Right ventricle myocardium inferior (tissue), 1 donor: ENCODE measurements at regions of chr6 and their contacts with region 1.

Region 1: DNA sequence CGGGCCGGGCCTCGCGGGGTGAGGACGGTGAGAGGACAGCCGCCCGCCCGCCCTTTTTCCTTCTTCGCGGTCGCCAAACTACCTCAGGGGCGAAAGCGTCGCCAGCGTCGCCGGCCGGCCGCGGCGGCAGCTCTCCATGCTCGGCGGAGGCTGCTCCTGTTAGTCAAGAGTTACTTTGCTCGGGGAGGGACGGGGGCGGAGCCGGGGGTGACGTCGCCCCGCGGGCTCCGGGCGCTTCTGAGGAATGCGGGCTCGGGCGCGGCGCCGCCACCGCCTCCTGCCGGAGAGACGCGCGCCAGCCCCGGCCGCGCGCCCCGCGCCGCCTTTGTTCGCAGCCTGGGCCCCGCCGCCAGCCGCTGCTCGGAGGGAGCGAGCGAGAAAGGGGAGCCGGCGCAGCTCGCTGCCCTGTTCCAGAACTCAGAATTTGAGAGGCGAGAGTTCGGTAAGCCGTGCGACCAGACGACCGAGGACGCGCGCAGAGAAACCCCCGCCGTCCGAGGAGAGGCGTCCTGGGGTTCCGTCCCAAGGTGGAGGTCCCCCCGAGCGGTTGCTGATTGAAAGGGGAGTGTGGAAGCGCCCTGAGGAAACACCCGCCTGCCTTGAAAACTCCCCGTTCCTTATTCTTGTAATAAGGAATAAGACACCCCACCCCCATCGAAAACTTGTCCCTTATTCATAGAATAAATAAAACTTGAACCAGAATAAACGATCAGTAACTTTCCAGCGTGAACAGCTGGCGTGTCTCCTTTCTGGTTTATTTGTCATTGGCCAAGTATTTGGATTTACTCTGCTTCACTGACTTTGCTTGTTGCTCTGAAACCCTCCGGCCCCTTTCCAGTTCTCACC is at the start of gene PTPRK:
- DNase-seq: peak; percentile 94
- ATAC-seq: peak; percentile 96
- total RNA-seq, gene PTPRK: 30.1 TPM

Region 2: DNA sequence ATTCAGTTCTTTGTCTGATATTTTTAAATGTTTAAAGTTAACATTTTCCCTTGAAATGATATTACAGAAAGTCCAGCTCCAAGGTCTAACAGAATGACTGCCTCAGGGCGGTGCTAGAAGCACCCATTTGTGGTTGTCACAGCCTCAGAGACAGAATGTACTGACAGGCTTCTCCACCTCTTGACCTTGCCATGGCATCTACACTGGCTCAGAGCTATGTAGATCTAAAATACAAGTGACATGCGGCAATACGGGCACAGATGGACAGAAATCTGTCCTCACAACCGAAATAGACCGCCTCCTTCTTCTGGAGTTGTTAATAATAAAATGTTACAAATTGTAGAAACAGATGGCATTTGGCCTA is 452.6 kb before region 1 on chr6:
- intact Hi-C with region 1: loop called (anchors 2 kb)
- DNase-seq: peak; percentile 45
- ATAC-seq: peak; percentile 96

Region 3: GRCh38 chr6:128112494-128112893 is 408.2 kb before region 1 on chr6:
- intact Hi-C with region 1: loop called (anchors 5 kb)
- DNase-seq: no peak
- ATAC-seq: peak; percentile 67

Region 4: DNA sequence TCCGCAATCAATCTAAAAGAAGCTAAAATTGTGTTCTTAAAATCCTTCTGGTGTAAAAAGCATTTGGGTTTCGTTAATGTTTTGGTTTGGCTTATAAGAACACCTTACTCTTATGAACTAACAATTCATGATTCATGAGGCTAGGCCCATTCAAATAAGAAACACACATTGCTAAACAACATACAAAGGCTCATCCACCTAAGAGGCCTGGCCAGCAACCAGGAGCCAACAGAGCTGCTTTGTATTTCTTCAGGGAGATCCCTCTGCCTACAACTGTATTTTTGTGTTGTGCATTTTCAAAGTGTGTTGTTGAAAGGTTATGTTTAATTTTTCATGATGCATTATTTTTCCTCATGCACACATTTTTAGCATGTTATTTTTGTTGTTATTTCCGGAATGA is 98.9 kb before region 1 on chr6:
- intact Hi-C with region 1: loop called (anchors 5 kb)
- DNase-seq: no peak
- ATAC-seq: no peak

Region 5: GRCh38 chr6:128438393-128438792 is 82.3 kb before region 1 on chr6:
- intact Hi-C with region 1: no loop called
- DNase-seq: no peak
- ATAC-seq: peak; percentile 50

Region 6: GRCh38 chr6:128456510-128457230 is 64.0 kb before region 1 on chr6:
- intact Hi-C with region 1: no loop called
- DNase-seq: no peak
- ATAC-seq: no peak

Region 7: GRCh38 chr6:128569737-128570679 is 49.3 kb after region 1 on chr6:
- intact Hi-C with region 1: no loop called
- DNase-seq: no peak
- ATAC-seq: no peak

Region 8: GRCh38 chr6:128648022-128648598 is 127.5 kb after region 1 on chr6:
- intact Hi-C with region 1: loop called (anchors 2 kb)
- DNase-seq: no peak
- ATAC-seq: peak; percentile 90

Region 9: DNA sequence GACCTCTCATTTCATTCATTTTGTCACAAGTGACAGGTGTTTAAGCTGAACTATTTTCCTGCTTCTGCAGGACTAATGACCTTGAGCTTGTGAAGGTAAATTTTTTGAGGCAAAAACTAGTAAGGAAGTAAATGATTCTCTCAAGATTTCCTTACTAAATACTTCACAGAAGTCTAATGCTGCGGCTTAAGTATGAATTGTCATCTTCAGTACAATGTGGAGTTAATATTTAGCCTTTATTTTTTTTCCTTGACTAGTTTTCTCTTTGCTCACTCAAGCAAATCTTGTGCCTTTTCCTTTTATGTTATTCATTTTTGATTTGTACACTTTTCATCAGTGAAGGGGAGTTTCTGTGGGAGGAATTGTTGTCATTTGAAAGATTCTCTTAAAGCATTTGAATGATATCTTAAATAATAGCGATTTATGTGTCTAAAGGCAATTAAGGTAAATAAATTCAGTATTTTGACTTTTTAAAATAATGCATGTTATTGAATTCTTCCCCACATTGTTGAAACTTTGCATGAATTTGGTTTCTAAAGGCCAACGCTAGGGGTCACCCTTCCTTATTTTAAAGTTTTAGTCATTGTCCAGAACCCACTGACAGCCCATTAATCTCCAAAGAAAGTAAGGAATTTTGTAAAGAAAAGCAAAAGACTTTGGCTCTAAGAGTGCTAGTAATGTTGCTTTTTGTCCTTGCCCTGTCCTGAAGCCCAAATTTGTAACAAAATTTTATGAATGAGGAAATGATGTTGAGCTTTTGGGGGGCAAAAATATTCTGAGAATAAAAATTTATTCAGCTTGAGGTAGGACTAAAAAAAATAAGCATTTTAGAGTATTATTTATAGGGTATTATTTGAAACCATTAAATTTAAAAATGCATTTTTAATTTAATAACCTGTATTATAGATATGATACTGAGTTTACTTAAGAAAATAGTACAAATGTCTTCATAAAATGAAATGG is 204.9 kb after region 1 on chr6:
- intact Hi-C with region 1: loop called (anchors 5 kb)
- DNase-seq: no peak
- ATAC-seq: no peak